ENCODE measurements at regions of chr9 and their contacts with region 1.

Region 1: DNA sequence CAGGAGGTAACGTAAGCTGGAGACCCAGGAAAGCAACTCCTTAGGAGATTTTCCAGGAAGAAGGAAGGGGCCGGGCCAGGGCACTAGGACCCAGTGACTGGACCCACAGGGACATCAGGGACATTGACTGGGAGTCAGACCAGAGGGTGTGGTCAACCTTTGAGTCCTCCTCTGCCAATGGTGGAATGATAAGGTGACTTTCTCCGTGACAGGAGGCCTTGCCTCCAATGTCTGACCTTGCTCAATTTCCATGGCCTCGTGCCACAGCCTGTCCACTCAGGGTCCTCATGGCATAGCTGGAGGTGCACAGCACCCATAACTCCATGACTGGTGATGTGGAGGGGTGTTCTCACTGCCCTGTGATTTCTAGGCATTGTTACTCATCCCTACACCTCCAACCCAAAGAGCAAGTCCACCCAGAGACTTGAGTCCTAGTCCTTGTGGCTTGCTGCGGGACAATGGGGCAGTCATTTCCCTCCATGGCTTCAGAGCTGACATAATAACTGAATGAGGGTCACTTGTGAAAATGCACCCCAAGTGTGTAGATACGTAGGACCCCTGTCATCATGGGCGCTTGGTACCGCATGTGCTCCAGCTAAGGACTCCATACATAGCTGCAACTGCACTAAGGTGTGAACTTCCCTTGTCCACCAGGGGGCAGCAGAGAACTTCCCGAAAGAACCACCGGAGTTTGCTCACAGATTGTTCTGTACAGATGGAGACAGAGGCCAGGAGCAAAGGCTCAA is 4.1 kb upstream of the AMBP start:
- DNase-seq: peak; percentile 89
- H3K4me3 Mint-ChIP-seq: no peak overlapping the region
- H3K27ac Mint-ChIP-seq: no peak overlapping the region
- H3K4me1 Mint-ChIP-seq: no peaks in the 10 kb centered on the region
- H3K27me3 Mint-ChIP-seq: peaks cover 9% of the 10 kb centered on the region

Region 2: GRCh38 chr9:113682297-113682771 is 399.9 kb before region 1 on chr9:
- CTCF ChIA-PET with region 1: no interaction called
- DNase-seq: peak; percentile 60
- H3K4me3 Mint-ChIP-seq: no peak overlapping the region
- H3K27ac Mint-ChIP-seq: no peak overlapping the region
- H3K4me1 Mint-ChIP-seq: no peaks in the 10 kb centered on the region
- H3K27me3 Mint-ChIP-seq: peaks cover 63% of the 10 kb centered on the region

Region 3: GRCh38 chr9:114092336-114092735 is 10.1 kb after region 1 on chr9:
- CTCF ChIA-PET with region 1: interaction called, 14 read pairs
- DNase-seq: no peak
- H3K4me3 Mint-ChIP-seq: no peak overlapping the region
- H3K27ac Mint-ChIP-seq: no peak overlapping the region
- H3K4me1 Mint-ChIP-seq: no peaks in the 10 kb centered on the region
- H3K27me3 Mint-ChIP-seq: peaks cover 25% of the 10 kb centered on the region

Region 4: DNA sequence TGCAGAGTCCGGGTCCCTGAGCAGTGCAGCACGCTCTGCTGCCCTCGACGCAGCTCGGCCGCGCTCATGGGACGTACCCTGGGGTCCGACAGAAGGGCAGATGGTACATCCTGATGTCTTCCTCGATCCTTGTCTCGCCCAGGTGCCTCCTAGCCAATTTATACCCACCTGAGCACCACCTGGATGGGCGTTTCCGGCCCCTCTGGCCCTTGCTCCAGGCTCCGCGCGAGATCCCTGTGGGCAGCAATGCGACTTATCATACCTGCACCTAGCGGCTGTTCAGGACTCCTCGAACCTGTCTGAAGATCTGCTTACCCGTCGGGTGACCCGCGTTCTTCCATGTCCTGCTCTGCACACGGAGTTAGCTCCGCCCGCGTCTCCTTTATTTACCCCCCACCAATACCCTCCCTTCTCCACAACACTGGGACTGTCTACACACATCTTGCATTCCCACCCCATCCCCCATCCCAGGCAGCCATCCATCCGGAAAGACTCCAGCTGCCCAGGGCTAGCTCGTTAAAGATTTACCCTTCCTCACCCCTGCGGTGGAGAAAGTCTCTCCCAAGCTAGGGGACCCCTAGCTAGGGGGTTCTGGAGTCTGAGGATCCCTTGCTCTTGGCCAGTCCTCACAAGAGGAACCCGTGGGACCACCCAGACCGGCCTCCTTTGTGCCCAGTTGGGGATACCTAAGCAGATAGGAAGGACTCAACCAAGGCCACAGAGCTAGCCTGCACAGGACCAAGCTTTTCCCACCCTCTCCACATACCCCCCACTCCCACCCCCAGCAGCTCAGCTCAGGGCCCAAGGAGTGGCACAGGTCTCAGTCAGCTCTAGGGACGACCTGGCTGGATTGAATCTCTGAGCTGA is 17.0 kb after region 1 on chr9 and contains the start of gene KIF12:
- CTCF ChIA-PET with region 1: interaction called, 14 read pairs
- DNase-seq: no peak
- H3K4me3 Mint-ChIP-seq: no peak within 1 kb of the TSS
- H3K27ac Mint-ChIP-seq: no peak within 1 kb of the TSS
- H3K4me1 Mint-ChIP-seq: no peaks in the 10 kb centered on the region
- H3K27me3 Mint-ChIP-seq: peaks cover 58% of the 10 kb centered on the region

Region 5: GRCh38 chr9:114108016-114108833 is 26.0 kb after region 1 on chr9:
- CTCF ChIA-PET with region 1: interaction called, 30 read pairs
- DNase-seq: peak; percentile 74
- H3K4me3 Mint-ChIP-seq: no peak overlapping the region
- H3K27ac Mint-ChIP-seq: peak overlapping the region; percentile 53
- H3K4me1 Mint-ChIP-seq: no peaks in the 10 kb centered on the region
- H3K27me3 Mint-ChIP-seq: peaks cover 29% of the 10 kb centered on the region

Region 6: DNA sequence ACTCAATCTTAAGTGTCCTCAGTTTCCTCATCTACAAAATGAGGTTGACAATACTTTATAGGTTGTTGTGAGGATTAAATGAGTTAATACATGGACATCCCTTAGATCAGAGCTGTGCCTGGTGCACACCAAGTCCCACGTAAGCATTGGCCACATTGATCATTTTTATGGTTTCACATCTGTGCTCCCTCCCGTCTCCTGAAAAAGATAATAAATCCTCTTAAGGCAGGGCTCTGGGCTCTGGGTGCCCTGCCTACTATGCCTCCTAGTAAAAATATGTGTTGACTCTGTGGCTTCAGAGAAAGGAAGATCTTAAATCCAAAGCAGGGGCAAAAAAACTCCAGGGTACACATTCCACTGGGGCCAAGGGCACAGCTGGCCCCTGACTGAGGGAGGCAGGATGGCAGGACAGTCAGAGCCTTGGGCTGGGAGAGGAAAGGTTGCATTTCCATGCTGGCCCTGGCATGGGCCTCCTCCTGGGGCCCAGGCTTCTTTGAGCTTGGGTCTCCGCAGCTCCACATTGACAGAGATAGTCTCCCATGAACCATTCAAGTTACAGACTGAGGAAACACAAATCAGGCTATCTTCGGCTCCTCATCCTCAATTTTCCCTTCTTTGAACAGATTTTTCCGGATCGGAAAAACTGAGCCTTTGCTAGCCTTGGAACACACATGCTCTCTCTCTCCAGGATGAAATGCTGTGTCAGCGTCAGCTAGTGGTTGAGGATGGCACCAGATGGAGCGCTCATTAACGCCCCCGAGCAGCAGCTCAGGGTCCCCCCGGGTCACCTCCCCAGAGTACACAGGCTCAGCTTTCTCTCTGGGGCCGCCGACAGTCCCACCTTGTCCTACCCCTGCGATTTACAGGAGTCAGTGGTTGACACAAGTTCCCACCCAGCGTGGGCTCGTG is 39.3 kb after region 1 on chr9:
- CTCF ChIA-PET with region 1: no interaction called
- DNase-seq: no peak
- H3K4me3 Mint-ChIP-seq: no peak overlapping the region
- H3K27ac Mint-ChIP-seq: no peak overlapping the region
- H3K4me1 Mint-ChIP-seq: no peaks in the 10 kb centered on the region
- H3K27me3 Mint-ChIP-seq: peaks cover 27% of the 10 kb centered on the region